KBM-7 (cell line): ENCODE measurements at regions of chr10 and their contacts with region 1.

Region 1: DNA sequence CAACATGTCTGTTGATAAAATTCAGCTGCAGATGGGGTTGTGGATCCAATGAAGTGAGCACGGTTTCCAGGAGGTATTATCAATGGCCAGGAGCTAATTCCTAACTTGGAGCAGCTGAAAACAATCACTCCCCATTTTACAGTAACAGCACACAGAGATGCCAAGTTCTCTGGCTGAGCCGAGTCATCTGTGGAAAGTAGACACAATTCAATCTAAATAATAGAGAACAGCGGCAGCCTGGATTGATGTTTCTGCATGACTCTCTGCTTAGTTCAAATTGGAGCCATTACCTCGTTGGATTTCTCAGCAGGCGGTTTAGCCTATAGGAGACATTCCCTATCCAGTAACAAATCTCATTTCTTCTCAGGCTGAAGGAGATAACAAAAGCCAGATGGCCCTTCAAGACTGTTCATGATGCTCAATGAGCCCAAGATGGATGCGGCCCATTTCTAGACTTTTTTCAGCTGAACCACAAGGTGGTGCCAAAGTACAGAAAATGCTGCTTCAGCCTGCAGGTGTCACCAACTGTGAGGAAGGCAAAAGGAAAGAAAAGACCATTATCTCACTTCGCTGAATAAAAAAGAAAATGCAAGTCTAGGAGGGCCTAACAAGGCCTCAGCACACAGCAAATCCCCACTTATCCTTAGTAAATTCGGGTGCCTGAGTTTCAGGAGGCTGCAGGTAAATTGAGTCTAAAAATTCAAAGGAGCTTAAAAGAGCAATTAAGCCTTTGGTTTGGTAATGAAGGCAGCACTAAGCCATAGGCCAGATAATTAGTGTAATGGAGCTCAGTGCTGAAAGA is 83.7 kb downstream of the SLC16A9 start:
- DNase-seq: peak; percentile 81

Region 2: GRCh38 chr10:59493017-59493416 is 132.9 kb before region 1 on chr10:
- in situ Hi-C with region 1: no loop called
- DNase-seq: no peak

Region 3: DNA sequence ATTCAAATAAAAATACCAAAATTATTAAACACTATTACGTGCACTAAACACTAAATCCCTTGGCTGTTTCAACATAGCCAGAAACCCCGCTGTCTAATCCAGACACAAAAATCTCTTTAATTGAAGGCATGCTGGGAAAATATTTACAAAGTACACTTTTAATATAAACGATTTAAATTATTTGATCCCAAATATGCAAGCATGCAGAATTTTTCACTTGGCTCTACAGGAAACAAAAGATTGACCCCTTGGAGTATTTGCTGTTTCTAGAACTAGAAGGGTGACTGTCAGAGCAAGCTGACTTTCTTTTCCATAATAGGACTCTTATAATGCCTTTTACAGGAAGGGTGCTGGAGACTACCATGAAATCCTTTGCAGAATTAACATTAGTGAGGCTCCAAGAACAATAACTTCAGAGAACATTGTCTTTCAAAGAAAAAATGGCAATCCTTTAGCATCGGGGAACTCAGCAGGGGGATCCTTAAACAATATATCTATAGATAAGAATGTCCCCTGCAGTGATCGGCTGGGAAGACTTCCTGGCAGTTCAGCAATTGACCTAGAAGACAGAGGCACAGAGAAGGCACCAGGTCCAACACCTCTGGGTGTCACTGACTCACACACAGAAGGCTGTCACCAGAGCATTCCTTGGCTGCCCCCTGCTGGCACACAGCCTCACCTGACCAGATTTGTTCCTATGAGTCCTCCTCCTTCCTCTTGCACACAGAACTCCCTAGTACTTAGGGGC is 183.1 kb after region 1 on chr10:
- in situ Hi-C with region 1: loop called (anchors 25 kb)
- DNase-seq: peak; percentile 86

Region 4: GRCh38 chr10:60032723-60033122 is 406.8 kb after region 1 on chr10:
- in situ Hi-C with region 1: loop called (anchors 25 kb)
- DNase-seq: peak; percentile 72